ENCODE measurements at regions of chr10 and their contacts with region 1.

Region 1: GRCh38 chr10:110893559-110894179 is 21.9 kb downstream of the PDCD4 start:
- DNase-seq: peak; percentile 24
- CTCF ChIP-seq: peak; percentile 33

Region 2: GRCh38 chr10:110228066-110228465 is 665.6 kb before region 1 on chr10:
- in situ Hi-C with region 1: no loop called
- DNase-seq: no peak
- CTCF ChIP-seq: no peak

Region 3: DNA sequence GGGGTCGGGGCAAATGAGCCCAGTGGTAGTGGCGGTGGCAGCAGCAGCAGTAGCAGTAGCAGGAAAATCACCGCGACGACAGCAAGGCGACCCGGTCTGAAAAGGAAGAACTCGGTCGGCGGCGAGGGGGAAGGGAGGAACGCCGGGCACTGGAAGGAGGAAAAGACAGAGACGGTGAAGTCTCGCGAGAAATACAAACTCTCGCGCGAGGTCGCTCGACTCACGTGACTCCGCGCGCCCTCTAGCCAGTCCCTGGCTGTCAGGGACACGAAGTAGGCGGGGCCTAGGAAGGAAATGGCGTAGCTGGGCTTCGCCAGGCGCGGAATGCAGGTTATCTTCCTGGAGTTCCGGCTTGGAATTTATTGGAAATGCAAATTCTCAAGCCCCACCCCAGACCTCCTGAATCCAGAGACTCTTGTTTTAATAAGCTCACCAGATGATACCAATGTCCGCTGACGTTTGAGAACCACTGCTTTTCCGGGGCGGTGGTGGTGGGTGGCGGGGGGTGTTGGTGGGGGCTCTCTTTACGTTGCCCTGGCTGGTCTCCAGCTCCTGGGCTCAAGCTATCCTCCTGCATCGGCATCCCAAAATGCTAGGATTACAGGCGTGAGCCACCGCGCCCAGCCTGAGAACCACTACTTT is 588.8 kb before region 1 on chr10 and contains the start of gene SMNDC1:
- in situ Hi-C with region 1: loop called (anchors 25 kb)
- DNase-seq: peak; percentile 97
- CTCF ChIP-seq: no peak

Region 4: DNA sequence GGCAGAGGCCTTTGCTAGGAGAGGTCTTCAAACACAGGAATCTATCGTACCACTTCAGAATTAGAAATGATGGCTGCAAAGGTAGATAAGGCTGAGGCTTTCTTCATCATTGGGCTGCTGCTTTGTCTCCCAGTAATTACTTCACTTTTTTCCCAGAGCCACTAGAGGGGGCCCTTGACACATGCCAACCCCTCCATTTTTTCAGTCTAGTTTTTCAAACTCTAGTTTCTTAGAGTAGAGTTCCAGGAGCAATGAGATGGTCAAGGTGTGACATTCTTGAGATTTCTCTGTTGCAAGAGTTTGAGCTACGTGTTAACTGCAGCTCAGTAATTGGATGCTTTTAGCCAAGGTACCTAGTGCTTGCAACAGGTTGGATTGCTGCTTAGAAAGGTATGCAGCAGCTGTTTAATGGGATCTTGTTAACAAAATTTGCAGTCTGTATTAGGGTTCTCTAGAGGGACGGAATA is 283.3 kb before region 1 on chr10:
- in situ Hi-C with region 1: loop called (anchors 25 kb)
- DNase-seq: peak; percentile 60
- CTCF ChIP-seq: peak; percentile 58